PC-3 (cell line): ENCODE measurements at regions of chr3 and their contacts with region 1.

Region 1: DNA sequence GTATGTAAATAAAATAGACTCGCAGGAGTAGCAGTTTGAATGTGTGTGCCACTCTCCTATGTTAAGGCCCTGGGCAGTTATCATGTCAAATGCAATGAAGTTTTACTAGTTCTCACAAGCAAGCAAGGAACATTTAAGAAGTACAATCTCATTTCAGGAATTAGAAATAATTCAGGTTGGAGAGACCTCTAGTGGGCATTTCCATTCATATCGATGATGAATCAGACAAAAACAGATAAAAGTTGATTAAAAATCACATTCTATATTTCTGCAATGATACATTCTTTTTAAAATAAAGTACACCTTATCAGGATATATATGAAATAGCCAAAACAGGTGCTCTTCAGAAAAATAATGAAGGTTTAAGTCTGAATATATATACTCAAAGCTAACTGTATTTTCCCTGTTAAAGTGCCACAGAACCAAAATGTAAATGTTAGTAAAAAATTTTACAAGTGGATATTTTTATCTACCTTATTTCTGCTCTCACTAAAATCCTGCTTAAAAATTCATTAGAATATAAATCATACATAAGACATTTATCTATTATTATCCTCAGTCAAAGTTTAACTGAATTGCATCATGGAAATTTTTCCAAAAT is 492.4 kb upstream of the FRG2C start:
- DNase-seq: peak; percentile 48
- ATAC-seq: no peak
- H3K4me3 ChIP-seq: no peak overlapping the region
- H3K27ac ChIP-seq: no peak overlapping the region
- H3K4me1 ChIP-seq: no peaks in the 10 kb centered on the region
- H3K27me3 ChIP-seq: no peaks in the 10 kb centered on the region
- CTCF ChIP-seq: peak; percentile 71

Region 2: DNA sequence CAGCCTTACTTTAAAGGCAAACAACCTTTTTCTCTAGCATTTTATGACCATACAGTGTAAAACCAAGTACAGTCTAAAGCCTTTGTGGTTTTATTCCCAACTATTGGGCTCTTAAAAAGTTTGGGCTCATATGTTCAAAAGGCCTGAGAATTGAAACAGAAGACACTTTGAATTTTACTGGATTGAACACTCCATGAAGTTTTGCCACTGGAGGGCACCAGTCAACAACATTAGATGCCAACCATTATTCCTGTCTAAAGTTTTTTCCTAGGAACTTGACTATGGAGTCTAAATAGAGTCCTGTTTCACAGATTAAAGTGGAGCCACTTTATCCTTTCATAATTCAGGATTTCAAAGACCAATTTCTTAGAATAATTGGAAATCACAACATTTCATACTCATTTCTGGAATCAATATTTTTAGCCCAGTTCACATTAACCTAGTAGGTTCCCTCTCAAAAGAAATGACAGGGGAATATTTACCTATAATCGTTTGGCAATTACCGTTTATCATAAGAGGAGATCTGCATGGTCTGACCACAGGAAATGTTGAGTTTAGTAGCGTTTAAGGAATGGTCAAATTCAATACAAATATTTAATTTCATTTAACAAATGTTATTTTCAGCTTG is 1302.9 kb before region 1 on chr3:
- CTCF ChIA-PET with region 1: no interaction called
- POLR2A ChIA-PET with region 1: no interaction called
- intact Hi-C with region 1: loop called (anchors 1 kb)
- DNase-seq: peak; percentile 49
- ATAC-seq: peak; percentile 20; the same call in 1 of the 2 replicates
- H3K4me3 ChIP-seq: no peak overlapping the region
- H3K27ac ChIP-seq: no peak overlapping the region
- H3K4me1 ChIP-seq: no peaks in the 10 kb centered on the region
- H3K27me3 ChIP-seq: no peaks in the 10 kb centered on the region
- CTCF ChIP-seq: peak; percentile 74

Region 3: DNA sequence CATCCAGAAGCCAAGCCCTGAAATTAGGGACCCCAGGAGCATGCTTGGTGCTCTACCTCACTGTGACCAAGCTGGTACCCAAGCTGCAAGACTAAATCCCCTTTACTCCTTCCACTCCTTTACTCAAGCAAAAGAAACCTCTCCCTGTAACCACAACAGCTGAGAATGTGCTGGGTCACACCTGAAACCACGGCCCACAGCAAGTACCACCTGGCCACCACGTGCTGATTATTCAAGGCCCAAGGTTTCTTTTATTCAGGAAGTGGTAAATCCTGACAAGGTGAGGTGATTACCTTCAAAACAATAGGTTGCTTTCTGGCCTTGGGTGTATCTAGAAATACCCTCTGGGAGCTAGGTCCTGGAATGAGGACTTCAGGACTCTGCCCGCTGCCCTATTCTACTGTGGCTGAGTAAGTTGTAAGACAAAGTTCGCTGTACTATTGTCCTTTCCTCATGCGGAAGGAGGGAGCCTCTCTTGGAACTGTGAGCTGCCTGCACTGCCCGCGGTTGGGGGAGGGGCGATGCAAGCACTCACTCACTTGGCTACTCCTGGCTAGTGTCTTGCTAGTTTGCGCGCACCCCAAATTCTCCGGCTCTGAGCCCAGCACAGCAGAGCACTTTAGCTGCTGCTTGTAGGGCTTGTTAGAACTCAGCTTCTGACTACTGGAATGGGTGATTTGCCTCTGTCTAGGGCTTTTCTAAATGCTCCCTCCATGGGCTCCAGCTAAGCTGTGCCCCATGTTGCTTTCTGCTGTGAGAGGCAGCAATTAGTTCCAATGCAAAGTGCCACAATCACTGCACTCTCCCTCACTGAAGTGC is 70.2 kb before region 1 on chr3:
- CTCF ChIA-PET with region 1: no interaction called
- POLR2A ChIA-PET with region 1: no interaction called
- intact Hi-C with region 1: no loop called
- DNase-seq: no peak
- ATAC-seq: no peak
- H3K4me3 ChIP-seq: no peak overlapping the region
- H3K27ac ChIP-seq: no peak overlapping the region
- H3K4me1 ChIP-seq: no peaks in the 10 kb centered on the region
- H3K27me3 ChIP-seq: no peaks in the 10 kb centered on the region
- CTCF ChIP-seq: no peak

Region 4: GRCh38 chr3:75303741-75304140 is 132.0 kb after region 1 on chr3:
- CTCF ChIA-PET with region 1: no interaction called
- POLR2A ChIA-PET with region 1: no interaction called
- intact Hi-C with region 1: no loop called
- DNase-seq: no peak
- ATAC-seq: no peak
- H3K4me3 ChIP-seq: no peak overlapping the region
- H3K27ac ChIP-seq: no peak overlapping the region
- H3K4me1 ChIP-seq: no peaks in the 10 kb centered on the region
- H3K27me3 ChIP-seq: 0 out of 2 replicates have a peak, but pooled peaks cover 7% of the 10 kb centered on the region
- CTCF ChIP-seq: no peak